ENCODE measurements at regions of chr12 and their contacts with region 1.

Region 1: GRCh38 chr12:68158432-68158831 is 1.1 kb downstream of the IFNG start:
- DNase-seq: no peak
- H3K4me3 ChIP-seq: no peak overlapping the region
- H3K27ac ChIP-seq: no peak overlapping the region
- H3K4me1 ChIP-seq: no peaks in the 10 kb centered on the region
- H3K27me3 ChIP-seq: no peaks in the 10 kb centered on the region
- CTCF ChIP-seq: peak in 2 of 3 experiments; percentile 49 to 52; a peak in 2 of 4 replicates
- EP300 ChIP-seq: no peak
- POLR2A ChIP-seq: no peak
- RAD21 ChIP-seq: peak; percentile 70 to 74

Region 2: GRCh38 chr12:68067762-68068376 is 90.6 kb before region 1 on chr12:
- CTCF ChIA-PET with region 1: interaction called, 12 read pairs
- POLR2A ChIA-PET with region 1: no interaction called
- DNase-seq: no peak
- H3K4me3 ChIP-seq: no peak overlapping the region
- H3K27ac ChIP-seq: no peak overlapping the region
- H3K4me1 ChIP-seq: no peaks in the 10 kb centered on the region
- H3K27me3 ChIP-seq: no peaks in the 10 kb centered on the region; a peak in 1 of 7 replicates
- CTCF ChIP-seq: peak; percentile 19 to 64 (median 61)
- EP300 ChIP-seq: no peak
- POLR2A ChIP-seq: no peak
- RAD21 ChIP-seq: peak; percentile 61 to 76

Region 3: DNA sequence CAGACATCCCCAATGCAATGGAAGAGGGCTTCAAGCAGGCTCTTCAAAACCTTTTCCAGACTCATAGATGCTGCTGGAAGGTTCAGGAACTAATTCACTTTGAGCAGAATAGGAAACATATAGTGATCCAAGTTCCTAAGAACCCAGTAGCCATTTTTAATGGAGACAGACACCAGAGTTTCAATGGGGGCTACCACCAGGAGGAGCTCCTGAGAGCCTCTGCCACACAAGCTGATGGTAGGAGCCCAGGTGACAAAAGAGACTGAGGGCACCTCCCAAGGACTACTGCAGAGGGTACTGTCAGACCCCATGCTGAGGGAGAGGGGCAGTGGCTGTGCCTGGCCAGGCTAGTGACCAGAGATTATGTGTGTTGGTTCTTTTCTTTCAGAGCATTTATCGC is 44.8 kb before region 1 on chr12:
- CTCF ChIA-PET with region 1: interaction called, 40 read pairs
- POLR2A ChIA-PET with region 1: no interaction called
- DNase-seq: peak in 1 of 2 experiments; percentile 77
- H3K4me3 ChIP-seq: no peak overlapping the region
- H3K27ac ChIP-seq: no peak overlapping the region
- H3K4me1 ChIP-seq: peaks cover 0 to 4% (median 1%) of the 10 kb centered on the region in 4 experiments; a peak in 4 of 7 replicates
- H3K27me3 ChIP-seq: no peaks in the 10 kb centered on the region
- CTCF ChIP-seq: peak; percentile 50 to 72 (median 57)
- EP300 ChIP-seq: no peak
- POLR2A ChIP-seq: no peak
- RAD21 ChIP-seq: peak; percentile 50 to 63

Region 4: GRCh38 chr12:68137335-68137830 is 21.0 kb before region 1 on chr12:
- CTCF ChIA-PET with region 1: interaction called, 27 read pairs
- POLR2A ChIA-PET with region 1: no interaction called
- DNase-seq: no peak
- H3K4me3 ChIP-seq: no peak overlapping the region
- H3K27ac ChIP-seq: no peak overlapping the region
- H3K4me1 ChIP-seq: peaks cover 0 to 7% (median 0%) of the 10 kb centered on the region in 4 experiments; a peak in 5 of 7 replicates
- H3K27me3 ChIP-seq: no peaks in the 10 kb centered on the region
- CTCF ChIP-seq: no peak
- EP300 ChIP-seq: no peak
- POLR2A ChIP-seq: no peak
- RAD21 ChIP-seq: no peak

Region 5: GRCh38 chr12:68169213-68169889 is 10.9 kb after region 1 on chr12:
- CTCF ChIA-PET with region 1: interaction called, 10 read pairs
- POLR2A ChIA-PET with region 1: no interaction called
- DNase-seq: no peak
- H3K4me3 ChIP-seq: no peak overlapping the region
- H3K27ac ChIP-seq: no peak overlapping the region
- H3K4me1 ChIP-seq: no peaks in the 10 kb centered on the region
- H3K27me3 ChIP-seq: no peaks in the 10 kb centered on the region
- CTCF ChIP-seq: no peak
- EP300 ChIP-seq: no peak
- POLR2A ChIP-seq: no peak
- RAD21 ChIP-seq: no peak

Region 6: DNA sequence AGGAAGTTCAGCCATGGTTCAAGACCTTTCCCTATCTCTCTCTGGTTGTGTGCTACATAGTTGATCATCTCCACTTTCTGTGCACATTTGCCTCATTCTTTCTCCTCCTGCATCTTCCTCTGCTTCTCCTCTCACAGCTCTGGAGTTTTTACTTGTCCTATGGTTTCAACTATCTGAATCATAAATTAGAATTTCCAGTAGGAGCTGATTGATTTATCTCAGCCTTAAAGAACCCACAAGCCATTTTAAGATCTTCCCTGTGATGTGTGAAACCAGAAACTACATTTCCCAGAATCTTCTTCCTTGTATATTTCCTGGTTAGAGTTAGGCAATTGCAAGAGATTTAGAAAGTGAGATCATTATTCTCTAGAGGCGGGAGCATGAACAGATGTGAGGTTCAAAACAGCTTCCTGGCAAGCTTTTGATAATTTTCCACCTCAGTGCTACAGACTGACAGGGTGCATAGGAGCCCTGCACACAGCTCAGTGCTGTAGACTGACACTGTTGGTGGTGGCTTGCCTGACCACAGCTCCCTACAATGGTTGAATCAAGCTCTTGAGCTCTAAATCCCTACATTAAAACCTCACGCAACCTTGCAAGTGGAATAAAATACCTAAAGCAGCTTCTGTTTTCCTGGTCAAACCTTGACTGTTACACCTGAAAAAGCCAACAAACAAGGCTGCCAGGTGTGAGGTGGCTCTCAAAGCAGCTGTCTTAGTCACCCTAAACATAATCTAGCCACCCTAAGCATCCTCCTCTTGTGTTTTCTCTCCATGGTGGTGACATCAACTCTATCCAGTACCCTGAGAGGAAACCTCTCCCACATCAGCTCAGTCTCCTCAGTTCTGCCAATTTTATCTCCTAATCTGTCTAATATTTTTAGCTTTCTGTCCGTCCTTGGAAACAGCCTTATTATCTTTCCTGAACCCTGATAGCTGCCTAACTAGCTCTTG is 22.6 kb after region 1 on chr12:
- CTCF ChIA-PET with region 1: interaction called, 21 read pairs
- POLR2A ChIA-PET with region 1: no interaction called
- DNase-seq: no peak
- H3K4me3 ChIP-seq: no peak overlapping the region
- H3K27ac ChIP-seq: no peak overlapping the region
- H3K4me1 ChIP-seq: no peaks in the 10 kb centered on the region
- H3K27me3 ChIP-seq: no peaks in the 10 kb centered on the region
- CTCF ChIP-seq: no peak
- EP300 ChIP-seq: no peak
- POLR2A ChIP-seq: no peak
- RAD21 ChIP-seq: no peak

Region 7: GRCh38 chr12:68303850-68304249 is 145.4 kb after region 1 on chr12:
- CTCF ChIA-PET with region 1: no interaction called
- POLR2A ChIA-PET with region 1: no interaction called
- DNase-seq: no peak
- H3K4me3 ChIP-seq: no peak overlapping the region
- H3K27ac ChIP-seq: no peak overlapping the region
- H3K4me1 ChIP-seq: no peaks in the 10 kb centered on the region
- H3K27me3 ChIP-seq: peaks cover 0 to 1% (median 0%) of the 10 kb centered on the region in 4 experiments; a peak in 1 of 7 replicates
- CTCF ChIP-seq: no peak
- EP300 ChIP-seq: no peak
- POLR2A ChIP-seq: no peak
- RAD21 ChIP-seq: no peak